Gastrocnemius medialis (tissue), 4 donors: ENCODE measurements at regions of chr16 and their contacts with region 1.

Region 1: DNA sequence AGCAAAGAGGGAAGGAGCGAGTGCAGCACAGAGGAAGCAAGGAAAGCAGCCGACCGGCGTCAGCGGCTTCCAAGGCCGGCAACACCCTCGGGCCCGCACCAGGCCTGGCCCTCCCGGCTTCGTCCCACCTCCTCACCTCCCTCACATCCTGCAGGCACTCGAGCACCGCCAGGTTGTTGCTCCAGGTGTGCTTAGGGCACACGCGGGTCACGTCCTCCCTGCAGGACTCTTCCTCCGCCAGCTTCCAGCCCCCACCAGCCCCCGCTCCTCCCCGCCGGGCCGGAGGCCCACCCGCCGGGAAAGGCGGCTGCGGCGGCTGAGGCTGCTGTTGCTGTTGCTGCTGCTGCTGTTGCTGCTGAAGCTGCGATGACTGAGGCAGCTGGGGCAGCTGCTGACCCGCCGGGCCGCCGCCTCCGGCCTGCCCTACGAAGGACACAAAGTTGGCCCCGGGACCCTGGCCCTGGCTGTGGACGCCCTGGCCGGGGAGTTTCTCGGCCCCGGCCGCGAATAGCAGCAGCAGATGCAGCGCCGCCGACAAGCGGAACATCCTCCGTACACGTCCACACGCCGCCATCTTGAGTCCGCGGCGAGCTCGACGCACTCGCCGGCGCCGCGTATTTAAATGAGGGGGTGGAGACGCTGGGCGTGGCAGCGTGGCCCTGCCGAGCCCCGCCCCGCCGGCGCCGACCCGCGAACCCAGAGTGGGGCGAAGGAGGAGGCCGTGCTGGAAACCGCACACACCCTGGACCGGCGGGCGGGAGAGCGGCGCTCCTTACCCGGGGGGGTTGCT is at the start of gene GLG1:
- DNase-seq: peak; percentile 82 to 88
- ATAC-seq: peak; percentile 85 to 88
- H3K4me3 ChIP-seq: peak within 1 kb of the TSS; percentile 64 to 99 (median 96)
- H3K27ac ChIP-seq: peak within 1 kb of the TSS; percentile 87 to 98 (median 98)
- H3K4me1 ChIP-seq: peaks cover 34% of the 10 kb centered on the region in 2 donors
- H3K27me3 ChIP-seq: no peaks in the 10 kb centered on the region
- CTCF ChIP-seq: no peak
- POLR2A ChIP-seq: peak; percentile 93
- total RNA-seq, gene GLG1: 72.0 to 170 (median 105) TPM

Region 2: GRCh38 chr16:74296432-74297144 is 310.1 kb before region 1 on chr16 and contains the start of gene PSMD7:
- in situ Hi-C with region 1: no loop called
- intact Hi-C with region 1: loop called (anchors 5 kb)
- DNase-seq: peak; percentile 86 to 89
- ATAC-seq: peak; percentile 96 to 97
- H3K4me3 ChIP-seq: peak within 1 kb of the TSS; percentile 76 to 96 (median 91)
- H3K27ac ChIP-seq: peak within 1 kb of the TSS; percentile 94 to 98 (median 95)
- H3K4me1 ChIP-seq: peaks cover 15 to 41% of the 10 kb centered on the region in 2 donors
- H3K27me3 ChIP-seq: no peaks in the 10 kb centered on the region
- CTCF ChIP-seq: no peak
- POLR2A ChIP-seq: peak; percentile 87 to 95
- total RNA-seq, gene PSMD7: 190 to 267 (median 224) TPM

Region 3: DNA sequence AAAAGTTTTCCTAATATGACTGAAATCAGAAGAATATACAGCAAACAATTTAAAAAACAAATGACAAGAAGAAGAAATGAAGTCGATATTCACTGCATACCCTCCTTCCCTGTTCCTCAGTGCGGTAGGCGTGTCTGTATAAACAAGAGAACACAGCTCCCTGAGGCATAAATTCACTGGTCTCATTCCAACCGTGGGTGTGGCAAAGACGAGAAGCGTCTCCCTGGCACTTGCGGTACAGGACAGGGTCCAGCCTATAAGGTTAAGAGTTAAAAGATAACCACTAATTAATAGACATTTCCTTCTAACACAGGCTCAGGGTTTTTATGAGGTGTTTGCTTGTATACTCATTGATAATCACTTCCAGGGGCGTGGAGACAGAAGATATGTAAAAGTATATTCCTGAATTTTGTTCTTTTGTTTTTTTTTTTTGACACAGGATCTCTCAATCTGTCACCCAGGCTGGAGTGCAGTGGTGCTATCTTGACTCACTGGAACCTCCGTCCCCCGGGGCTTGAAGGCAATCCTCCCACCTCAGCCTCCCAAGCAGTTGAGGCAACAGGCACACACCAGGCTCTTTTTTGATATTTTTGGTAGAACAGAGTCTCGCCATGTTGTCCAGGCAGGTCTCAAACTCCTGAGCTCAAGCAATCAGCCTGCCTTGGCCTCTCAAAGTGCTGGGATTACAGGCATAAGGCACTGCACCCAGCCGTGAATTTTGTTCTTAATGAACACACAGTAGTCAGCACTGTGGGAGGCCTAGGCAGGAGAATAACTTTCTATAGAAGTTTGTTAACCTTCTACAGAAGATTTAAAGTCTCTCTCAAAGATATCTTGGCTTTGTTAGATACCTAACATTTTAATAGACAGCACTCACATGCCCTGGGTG is 126.3 kb before region 1 on chr16:
- in situ Hi-C with region 1: loop called in 1 of 4 experiments (anchors 25 kb)
- intact Hi-C with region 1: no loop called
- DNase-seq: peak; percentile 5 to 32
- ATAC-seq: peak in 1 of 2 donors; percentile 54
- H3K4me3 ChIP-seq: no peak overlapping the region
- H3K27ac ChIP-seq: peak overlapping the region in 3 of 4 donors; percentile 7 to 45 (median 36)
- H3K4me1 ChIP-seq: no peaks in the 10 kb centered on the region
- H3K27me3 ChIP-seq: no peaks in the 10 kb centered on the region
- CTCF ChIP-seq: no peak
- POLR2A ChIP-seq: no peak

Region 4: GRCh38 chr16:74563828-74564263 is 42.9 kb before region 1 on chr16:
- in situ Hi-C with region 1: no loop called
- intact Hi-C with region 1: loop called (anchors 5 kb)
- DNase-seq: peak; percentile 16 to 60
- ATAC-seq: peak; percentile 92
- H3K4me3 ChIP-seq: no peak overlapping the region
- H3K27ac ChIP-seq: peak overlapping the region; percentile 49 to 65 (median 55)
- H3K4me1 ChIP-seq: peaks cover 48 to 49% of the 10 kb centered on the region in 2 donors
- H3K27me3 ChIP-seq: no peaks in the 10 kb centered on the region
- CTCF ChIP-seq: peak in 1 of 5 experiments; percentile 24
- POLR2A ChIP-seq: no peak

Region 5: GRCh38 chr16:74666425-74667254 is 59.9 kb after region 1 on chr16 and contains the start of gene RFWD3:
- in situ Hi-C with region 1: no loop called
- intact Hi-C with region 1: loop called (anchors 5 kb)
- DNase-seq: peak; percentile 99
- ATAC-seq: peak; percentile 100
- H3K4me3 ChIP-seq: peak within 1 kb of the TSS; percentile 82 to 98 (median 93)
- H3K27ac ChIP-seq: peak within 1 kb of the TSS; percentile 70 to 81 (median 78)
- H3K4me1 ChIP-seq: peaks cover 8 to 11% of the 10 kb centered on the region in 2 donors
- H3K27me3 ChIP-seq: no peaks in the 10 kb centered on the region
- CTCF ChIP-seq: no peak
- POLR2A ChIP-seq: peak in 1 of 2 donors; percentile 37
- total RNA-seq, gene RFWD3: 2.5 to 7.1 (median 4.1) TPM